Lower leg skin (tissue), 4 donors: ENCODE measurements at regions of chr12 and their contacts with region 1.

Region 1: GRCh38 chr12:105053116-105053572 is 31.1 kb downstream of the ALDH1L2 start:
- DNase-seq: peak; percentile 87 to 94
- H3K4me3 ChIP-seq: no peak overlapping the region
- CTCF ChIP-seq: peak in 1 of 3 donors; percentile 60
- POLR2A ChIP-seq: no peak

Region 2: DNA sequence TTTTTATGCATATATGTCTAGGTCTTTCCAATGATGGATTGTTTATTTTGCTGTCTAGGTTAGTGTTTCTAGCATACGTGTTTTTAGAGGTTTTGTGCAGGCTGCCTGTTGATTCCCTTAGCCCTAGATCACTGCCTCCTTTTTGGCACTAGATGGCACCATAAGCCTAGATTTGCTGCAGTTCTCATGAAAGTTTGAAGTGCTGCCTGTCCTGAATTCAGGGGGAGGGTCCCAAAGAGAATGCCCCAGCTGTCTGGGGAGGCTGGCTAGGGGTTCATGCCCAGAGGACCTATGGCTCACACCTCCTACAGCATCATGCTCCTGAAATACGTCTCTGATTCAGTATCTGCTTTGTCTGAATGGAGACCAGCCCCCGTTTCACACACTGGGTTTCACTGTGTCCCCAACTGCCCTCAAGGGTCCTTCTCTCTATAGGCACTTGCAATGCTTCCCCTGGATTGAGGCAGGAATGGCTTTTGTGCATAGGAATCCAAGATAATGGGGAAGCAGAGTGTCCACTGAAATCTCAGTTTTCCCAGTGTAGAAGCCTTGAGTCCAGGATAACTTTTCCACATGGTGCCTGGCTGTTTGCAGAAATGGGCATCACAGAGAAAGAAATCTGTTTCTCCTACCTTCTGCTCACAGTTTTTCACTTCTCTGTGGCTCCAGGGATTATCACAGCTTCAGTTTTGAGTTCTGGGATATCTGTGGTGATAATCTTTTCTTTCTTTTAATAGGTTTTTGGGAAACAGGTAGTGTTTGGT is 851.7 kb before region 1 on chr12:
- intact Hi-C with region 1: loop called (anchors 5 kb)
- DNase-seq: peak in 1 of 2 donors; percentile 34
- H3K4me3 ChIP-seq: no peak overlapping the region
- CTCF ChIP-seq: peak in 1 of 3 donors; percentile 18
- POLR2A ChIP-seq: no peak

Region 3: GRCh38 chr12:104381731-104382480 is 671.2 kb before region 1 on chr12:
- intact Hi-C with region 1: loop called (anchors 10 kb)
- DNase-seq: peak; percentile 78 to 96
- H3K4me3 ChIP-seq: no peak overlapping the region
- CTCF ChIP-seq: peak in 1 of 3 donors; percentile 74
- POLR2A ChIP-seq: no peak

Region 4: DNA sequence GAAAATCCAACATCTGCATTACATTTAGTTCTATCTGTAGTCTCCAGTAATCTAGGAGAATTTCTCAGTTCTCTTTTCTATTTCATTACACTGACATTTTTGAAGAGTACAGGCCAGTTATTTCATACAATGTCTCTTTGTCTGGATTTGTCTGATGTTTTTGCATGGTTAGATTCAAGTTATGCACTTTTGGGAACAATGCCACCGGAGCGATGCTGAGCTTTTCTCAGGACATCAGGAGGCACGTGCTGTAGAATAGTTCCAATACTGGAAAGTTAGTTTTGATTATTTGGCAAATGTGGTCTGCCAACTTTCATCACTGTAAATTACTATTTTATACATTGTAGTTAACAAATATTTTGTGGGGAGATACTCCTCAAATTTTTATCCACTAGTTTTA is 12.0 kb before region 1 on chr12:
- intact Hi-C with region 1: loop called (anchors 1 kb)
- DNase-seq: no peak
- H3K4me3 ChIP-seq: no peak overlapping the region
- CTCF ChIP-seq: no peak
- POLR2A ChIP-seq: no peak

Region 5: DNA sequence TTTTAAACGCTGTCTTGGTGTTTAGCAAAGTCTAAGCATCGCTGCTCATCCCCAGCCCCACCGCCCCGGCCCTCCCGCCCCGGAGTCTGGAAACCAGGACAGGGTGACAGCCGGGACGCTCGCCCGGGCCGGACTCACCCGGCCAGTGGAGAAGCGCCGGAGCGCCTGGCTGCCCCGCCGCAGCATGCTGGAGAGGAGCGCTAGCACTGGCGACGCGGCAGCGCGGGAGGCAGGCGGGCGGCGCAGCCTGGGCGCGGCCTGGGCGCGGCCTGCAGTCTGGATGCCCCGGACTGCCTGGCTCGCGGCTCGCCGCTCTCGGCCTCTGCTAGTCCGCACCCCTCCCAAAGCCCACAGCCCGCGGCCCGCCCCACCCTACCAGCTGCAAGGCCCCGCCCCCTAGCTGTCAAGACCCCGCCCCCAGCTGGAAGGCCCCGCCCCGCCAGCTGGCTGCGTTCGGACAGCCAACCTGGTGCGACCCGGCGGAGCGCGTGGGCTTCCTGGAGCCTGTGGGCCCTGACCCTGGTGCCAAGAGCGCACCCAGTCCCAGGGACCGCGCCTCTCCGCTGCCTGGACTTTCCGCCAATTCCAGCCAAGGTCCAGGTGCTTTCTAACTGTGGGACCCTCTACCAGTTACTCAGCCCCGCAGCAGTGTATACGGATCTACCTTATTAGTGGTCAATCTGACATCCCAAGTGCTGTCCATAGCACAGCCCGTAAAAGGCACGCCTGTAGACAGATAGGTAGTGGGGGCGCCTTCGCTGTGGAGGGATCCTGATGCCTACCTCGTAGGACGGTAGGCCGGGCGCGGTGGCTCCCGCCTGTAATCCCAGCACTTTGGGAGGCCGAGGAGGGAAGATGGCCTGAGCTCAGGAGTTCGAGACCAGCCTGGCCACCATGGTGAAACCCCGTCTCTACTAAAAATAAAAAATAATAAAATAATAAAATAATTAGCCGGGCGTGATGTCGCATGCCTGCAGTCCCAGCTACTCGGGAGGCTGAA is 31.4 kb after region 1 on chr12 and contains the start of gene ALDH1L2:
- intact Hi-C with region 1: no loop called
- DNase-seq: peak; percentile 65 to 95
- H3K4me3 ChIP-seq: peak within 1 kb of the TSS; percentile 23
- CTCF ChIP-seq: no peak
- POLR2A ChIP-seq: no peak
- total RNA-seq, gene ALDH1L2: 0.86 to 2.4 (median 1.2) TPM